ENCODE measurements at regions of chr18 and their contacts with region 1.

Region 1: GRCh38 chr18:55589625-55590291 is 1.8 kb upstream of the TCF4 start:
- DNase-seq: peak; percentile 89 to 99 (median 93)

Region 2: DNA sequence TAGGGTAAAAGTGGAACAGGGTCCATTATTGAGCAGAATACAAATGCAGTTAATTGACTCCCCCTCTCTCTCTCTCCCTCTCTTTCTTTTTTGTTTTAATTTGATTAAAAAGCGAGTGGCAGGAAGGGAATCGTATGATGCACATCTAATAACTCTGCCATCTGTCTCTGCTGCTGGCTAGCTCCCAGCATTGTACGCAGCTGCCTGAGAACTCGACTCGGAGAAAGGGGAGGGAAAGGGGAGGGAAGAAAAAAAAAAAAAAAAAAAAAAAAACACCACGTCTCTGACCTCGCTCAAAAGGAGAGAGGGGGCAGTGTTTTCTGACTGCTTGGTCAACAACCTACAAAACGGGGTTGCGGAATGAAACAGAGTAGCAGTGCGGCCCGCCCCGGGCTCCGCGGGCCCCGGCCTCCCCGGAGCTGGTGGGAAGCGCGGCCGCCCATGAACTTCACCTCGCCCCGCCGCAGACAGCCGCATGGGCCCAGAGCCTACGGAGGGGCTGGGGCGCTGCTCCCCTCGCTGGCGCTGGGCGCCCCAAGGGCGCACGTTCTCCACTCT is 267.5 kb before region 1 on chr18:
- intact Hi-C with region 1: loop called (anchors 5 kb)
- DNase-seq: peak; percentile 67 to 96 (median 78)

Region 3: GRCh38 chr18:55343396-55344073 is 246.2 kb before region 1 on chr18:
- intact Hi-C with region 1: loop called (anchors 5 kb)
- DNase-seq: no peak

Region 4: GRCh38 chr18:55401638-55402191 is 188.0 kb before region 1 on chr18:
- intact Hi-C with region 1: loop called (anchors 5 kb)
- DNase-seq: peak in 1 of 10 donors; percentile 72

Region 5: GRCh38 chr18:55422456-55423180 is 167.1 kb before region 1 on chr18:
- intact Hi-C with region 1: loop called (anchors 5 kb)
- DNase-seq: peak in 3 of 10 donors; percentile 29 to 79 (median 48)

Region 6: DNA sequence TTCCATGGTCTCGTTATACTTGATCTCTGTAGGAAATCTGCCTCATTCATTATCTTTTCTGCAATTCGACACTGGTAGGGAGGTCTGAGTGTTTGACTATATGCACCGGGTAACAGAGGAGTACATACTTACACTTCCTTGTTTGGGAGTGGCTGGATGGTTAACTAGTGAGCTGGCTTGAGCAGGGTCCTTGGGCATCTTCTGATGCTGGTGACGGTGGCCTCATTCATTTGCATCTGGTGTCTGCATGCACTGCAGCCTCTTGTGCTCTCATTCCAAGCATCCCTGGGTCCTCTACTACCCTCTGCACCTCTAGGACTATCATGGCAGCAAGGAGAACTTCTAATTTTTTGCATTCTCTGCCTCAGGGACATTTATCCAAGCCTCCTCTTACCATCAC is 98.3 kb after region 1 on chr18:
- intact Hi-C with region 1: no loop called
- DNase-seq: no peak

Region 7: GRCh38 chr18:55706898-55707297 is 117.1 kb after region 1 on chr18:
- intact Hi-C with region 1: no loop called
- DNase-seq: no peak

Region 8: GRCh38 chr18:55781481-55781957 is 191.8 kb after region 1 on chr18:
- intact Hi-C with region 1: loop called (anchors 2 kb)
- DNase-seq: peak in 9 of 10 donors; percentile 35 to 94 (median 64)

Region 9: GRCh38 chr18:57107140-57107832 is 1517.5 kb after region 1 on chr18:
- intact Hi-C with region 1: no loop called
- DNase-seq: no peak